Astrocyte of the cerebellum (primary cell): ENCODE measurements at regions of chr6 and their contacts with region 1.

Region 1: GRCh38 chr6:72622094-72622940 is 453 bp downstream of the KCNQ5 start:
- DNase-seq: no peak
- H3K4me3 ChIP-seq: peak overlapping the region; percentile 73
- CTCF ChIP-seq: peak; percentile 28

Region 2: GRCh38 chr6:72564231-72564630 is 58.1 kb before region 1 on chr6:
- in situ Hi-C with region 1: no loop called
- DNase-seq: no peak
- H3K4me3 ChIP-seq: no peak overlapping the region
- CTCF ChIP-seq: no peak

Region 3: GRCh38 chr6:72699159-72699558 is 76.8 kb after region 1 on chr6:
- in situ Hi-C with region 1: no loop called
- DNase-seq: no peak
- H3K4me3 ChIP-seq: no peak overlapping the region
- CTCF ChIP-seq: no peak

Region 4: DNA sequence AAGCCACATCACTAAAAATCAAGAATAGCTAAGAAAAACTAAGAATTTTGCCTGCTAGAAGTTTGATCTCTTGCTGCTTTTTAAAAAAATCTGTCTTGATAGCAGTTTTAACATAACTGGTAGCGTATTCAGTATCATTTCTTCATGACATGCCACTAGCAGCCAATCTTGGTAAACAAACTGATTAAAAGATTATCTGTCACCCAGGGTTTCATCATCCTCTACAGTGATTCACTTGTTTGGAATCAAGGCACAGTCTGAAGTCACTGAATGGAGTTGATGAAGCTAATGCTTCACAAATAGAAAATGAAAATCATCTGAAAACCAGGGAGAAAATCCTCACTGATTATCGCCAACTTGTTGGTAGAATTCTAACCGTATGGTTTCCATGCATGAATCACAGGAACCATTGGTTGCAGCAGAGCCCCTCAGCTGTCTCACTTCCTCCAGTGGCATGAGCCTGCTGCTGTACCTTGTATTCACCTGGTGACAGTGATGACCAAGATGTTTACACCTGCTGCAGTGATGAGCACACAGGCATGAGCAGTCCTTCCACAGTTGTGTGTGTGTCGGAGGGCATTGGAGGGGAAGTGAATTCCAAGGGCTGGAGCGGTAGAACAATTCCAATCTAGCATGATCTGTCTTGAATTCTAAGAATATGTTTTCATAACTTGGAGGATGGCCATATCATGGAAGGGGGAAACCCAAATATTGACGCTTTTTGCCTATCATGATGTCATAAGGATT is 328.0 kb after region 1 on chr6:
- in situ Hi-C with region 1: loop called (anchors 25 kb)
- DNase-seq: no peak
- H3K4me3 ChIP-seq: no peak overlapping the region
- CTCF ChIP-seq: no peak

Region 5: DNA sequence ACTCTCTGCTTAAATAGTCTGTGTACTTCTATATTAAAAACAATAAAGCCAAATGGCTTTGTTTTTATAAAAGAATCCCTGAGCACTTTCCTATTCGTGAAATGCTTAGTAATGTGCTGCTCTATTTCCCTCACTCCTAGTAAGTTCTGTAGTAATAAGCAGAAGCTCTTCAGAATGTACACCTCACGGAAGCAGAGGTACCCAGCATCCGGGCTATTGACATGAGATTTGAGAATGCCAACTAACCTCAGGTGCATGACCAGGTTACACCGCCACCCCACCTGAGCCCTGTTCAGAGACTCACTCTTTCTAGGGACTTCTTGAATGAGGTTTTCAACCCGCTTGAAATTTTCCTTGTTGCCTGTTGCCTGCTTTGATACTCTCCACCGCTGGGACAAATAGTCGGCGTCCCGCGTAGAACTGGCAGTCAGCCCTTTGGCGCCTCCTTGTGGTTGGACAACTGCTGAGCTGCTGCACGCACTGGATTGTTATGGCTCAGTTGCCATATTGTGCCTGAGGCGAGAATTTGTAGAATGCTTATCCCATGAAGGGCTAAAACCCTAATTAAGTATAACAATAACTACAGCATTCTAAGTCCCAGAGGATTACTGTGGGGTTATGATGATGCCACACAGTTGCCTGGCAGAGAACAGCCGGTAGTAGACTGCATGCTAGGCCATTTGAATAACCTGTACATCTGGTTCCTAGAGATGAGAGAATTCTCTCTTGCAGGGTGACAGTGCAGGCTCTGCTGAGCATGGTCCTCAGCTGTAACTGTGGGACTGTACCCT is 507.5 kb after region 1 on chr6:
- in situ Hi-C with region 1: loop called (anchors 5 kb)
- DNase-seq: peak; percentile 72
- H3K4me3 ChIP-seq: no peak overlapping the region
- CTCF ChIP-seq: peak; percentile 99

Region 6: DNA sequence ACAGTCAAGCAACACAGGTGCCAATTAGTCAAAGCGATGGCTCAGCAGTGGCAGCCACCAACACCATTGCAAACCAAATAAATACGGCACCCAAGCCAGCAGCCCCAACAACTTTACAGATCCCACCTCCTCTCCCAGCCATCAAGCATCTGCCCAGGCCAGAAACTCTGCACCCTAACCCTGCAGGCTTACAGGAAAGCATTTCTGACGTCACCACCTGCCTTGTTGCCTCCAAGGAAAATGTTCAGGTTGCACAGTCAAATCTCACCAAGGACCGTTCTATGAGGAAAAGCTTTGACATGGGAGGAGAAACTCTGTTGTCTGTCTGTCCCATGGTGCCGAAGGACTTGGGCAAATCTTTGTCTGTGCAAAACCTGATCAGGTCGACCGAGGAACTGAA is 572.4 kb after region 1 on chr6:
- in situ Hi-C with region 1: loop called (anchors 5 kb)
- DNase-seq: no peak
- H3K4me3 ChIP-seq: no peak overlapping the region
- CTCF ChIP-seq: no peak